Activated naive CD4-positive, alpha-beta T cell treated with anti-CD3 and anti-CD28 coated beads for 36 hours (primary cell): ENCODE measurements at regions of chr9 and their contacts with region 1.

Region 1: DNA sequence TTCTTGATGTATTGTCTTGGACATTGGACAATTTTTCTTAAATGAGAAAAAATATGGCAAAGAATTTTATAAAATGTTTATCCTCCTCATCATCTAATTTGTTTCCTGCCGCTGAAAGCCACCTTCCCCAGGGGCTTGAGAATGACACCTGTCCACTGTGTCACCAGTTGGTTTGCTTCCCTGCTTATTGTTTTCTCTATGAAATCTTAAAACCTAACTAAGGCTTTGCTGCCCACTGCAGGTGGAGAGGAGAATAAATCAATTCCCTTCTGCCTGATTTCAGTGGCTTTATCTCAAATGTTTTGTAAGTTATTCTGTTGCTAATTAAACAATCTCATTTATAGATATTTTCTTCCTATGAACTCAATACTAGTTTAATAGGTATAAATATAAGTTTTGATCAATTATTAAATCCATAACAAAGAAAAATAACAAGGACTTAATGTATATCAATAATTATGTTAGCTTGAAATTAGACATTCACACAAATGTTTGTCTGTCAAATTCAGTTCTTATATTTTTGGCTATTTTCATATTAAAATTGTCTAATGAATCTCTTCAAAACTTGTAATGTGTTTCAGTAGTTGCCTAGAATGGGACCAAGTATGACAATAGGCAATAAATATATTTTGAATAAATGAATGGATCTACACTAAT is 822.5 kb downstream of the PTPRD start:
- DNase-seq: peak; percentile 39
- H3K4me3 Mint-ChIP-seq: no peak overlapping the region
- H3K27ac Mint-ChIP-seq: no peak overlapping the region
- H3K4me1 Mint-ChIP-seq: no peaks in the 10 kb centered on the region
- H3K27me3 Mint-ChIP-seq: no peaks in the 10 kb centered on the region

Region 2: GRCh38 chr9:9862235-9862810 is 72.0 kb after region 1 on chr9:
- CTCF ChIA-PET with region 1: no interaction called
- intact Hi-C with region 1: no loop called
- DNase-seq: no peak
- H3K4me3 Mint-ChIP-seq: no peak overlapping the region
- H3K27ac Mint-ChIP-seq: no peak overlapping the region
- H3K4me1 Mint-ChIP-seq: no peaks in the 10 kb centered on the region
- H3K27me3 Mint-ChIP-seq: no peaks in the 10 kb centered on the region

Region 3: DNA sequence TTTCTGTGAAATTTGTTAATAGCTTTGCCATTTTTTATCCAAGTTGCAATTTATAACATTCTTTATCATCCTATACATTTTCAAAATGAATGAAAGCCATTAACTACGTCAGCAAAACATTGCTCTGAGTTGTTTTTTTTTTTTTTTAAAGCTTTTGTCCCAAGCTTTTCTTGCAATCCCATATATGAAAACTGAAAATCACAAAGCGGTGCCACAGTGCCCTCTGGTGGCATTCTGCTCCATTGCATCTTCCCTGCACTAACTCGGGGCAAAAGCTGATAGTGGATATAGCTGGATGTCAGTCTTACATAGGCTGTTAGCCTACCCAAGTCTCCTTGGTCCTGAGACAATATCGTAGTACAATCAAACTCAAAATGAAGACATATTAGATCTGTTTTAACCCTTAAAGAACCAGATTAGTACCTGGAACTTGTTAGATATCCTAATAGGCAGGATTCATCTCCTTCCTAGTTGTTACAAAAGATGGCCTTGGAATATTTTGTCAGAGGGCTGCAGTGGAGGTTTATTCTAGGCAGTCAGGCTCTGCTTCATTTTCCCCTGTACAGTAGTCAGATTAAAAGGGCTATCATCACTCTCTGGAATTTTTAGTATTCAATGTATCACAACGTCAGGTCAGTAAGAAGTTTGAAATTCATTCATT is 152.6 kb after region 1 on chr9:
- CTCF ChIA-PET with region 1: interaction called, 6 read pairs
- intact Hi-C with region 1: loop called (anchors 2 kb)
- DNase-seq: peak; percentile 66
- H3K4me3 Mint-ChIP-seq: no peak overlapping the region
- H3K27ac Mint-ChIP-seq: no peak overlapping the region
- H3K4me1 Mint-ChIP-seq: no peaks in the 10 kb centered on the region
- H3K27me3 Mint-ChIP-seq: no peaks in the 10 kb centered on the region